Ovary (tissue), 10 donors: ENCODE measurements at regions of chr7 and their contacts with region 1.

Region 1: GRCh38 chr7:112449902-112450806 is at the start of gene IFRD1:
- DNase-seq: peak; percentile 98 to 100 (median 99)
- H3K4me3 ChIP-seq: peak within 1 kb of the TSS; percentile 98
- H3K27ac ChIP-seq: peak within 1 kb of the TSS; percentile 99
- H3K4me1 ChIP-seq: peaks cover 5% of the 10 kb centered on the region
- H3K27me3 ChIP-seq: no peaks in the 10 kb centered on the region
- CTCF ChIP-seq: no peak
- EP300 ChIP-seq: no peak
- POLR2A ChIP-seq: peak; percentile 100
- total RNA-seq, gene IFRD1: 35.1 to 75.1 (median 58.1) TPM

Region 2: DNA sequence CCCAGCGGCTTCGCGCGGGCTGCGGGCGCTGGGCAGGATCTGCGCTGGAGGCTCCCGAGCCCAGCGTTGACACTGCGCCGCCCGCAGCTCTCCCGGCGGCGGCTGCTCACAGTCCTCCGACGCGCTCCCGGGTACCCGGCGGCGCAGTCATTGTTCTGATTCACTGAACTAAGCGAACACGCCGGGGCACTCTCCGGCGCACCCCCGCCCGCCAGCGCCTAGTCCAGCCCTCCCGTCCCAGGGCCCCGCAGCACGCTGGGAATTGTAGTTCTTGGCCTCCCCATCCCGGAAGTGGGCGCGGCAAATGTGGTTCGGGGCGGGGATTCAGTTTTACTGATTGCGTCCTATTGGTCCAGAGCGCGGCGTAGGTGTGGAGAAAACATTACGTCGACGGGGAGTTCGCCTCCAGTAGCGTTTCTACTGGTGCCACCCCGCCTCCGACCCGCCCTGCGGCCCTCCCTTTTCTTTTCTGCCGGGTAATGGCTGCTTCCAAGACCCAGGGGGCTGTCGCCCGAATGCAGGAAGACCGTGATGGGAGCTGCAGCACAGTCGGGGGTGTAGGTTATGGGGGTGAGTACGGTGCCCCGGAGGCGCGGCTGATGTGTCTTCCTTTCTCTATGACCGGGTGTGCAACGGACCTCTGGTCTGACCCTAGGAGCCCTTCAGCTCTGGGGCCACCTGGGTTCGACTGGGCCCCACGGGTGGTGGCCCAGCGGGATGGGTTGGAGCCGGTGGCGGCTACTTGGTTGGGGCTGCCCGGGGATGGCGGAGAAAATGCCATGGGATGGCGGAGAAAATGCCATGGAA is 243.7 kb before region 1 on chr7 and contains the starts of genes DOCK4 and ZNF277:
- intact Hi-C with region 1: loop called in 1 of 4 experiments (anchors 5 kb)
- DNase-seq: peak; percentile 99 to 100 (median 99)
- H3K4me3 ChIP-seq: peak within 1 kb of the TSS; percentile 93
- H3K27ac ChIP-seq: peak within 1 kb of the TSS; percentile 81 to 87
- H3K4me1 ChIP-seq: peaks cover 2% of the 10 kb centered on the region
- H3K27me3 ChIP-seq: no peaks in the 10 kb centered on the region
- CTCF ChIP-seq: no peak
- EP300 ChIP-seq: no peak
- POLR2A ChIP-seq: peak; percentile 47
- total RNA-seq, gene DOCK4: 15.7 to 39.7 (median 28.3) TPM
- total RNA-seq, gene ZNF277: 18.1 to 27.3 (median 21.8) TPM

Region 3: GRCh38 chr7:112708236-112708635 is 258.1 kb after region 1 on chr7:
- intact Hi-C with region 1: no loop called
- DNase-seq: no peak
- H3K4me3 ChIP-seq: no peak overlapping the region
- H3K27ac ChIP-seq: no peak overlapping the region
- H3K4me1 ChIP-seq: no peaks in the 10 kb centered on the region
- H3K27me3 ChIP-seq: peaks cover 2% of the 10 kb centered on the region
- CTCF ChIP-seq: no peak
- EP300 ChIP-seq: no peak
- POLR2A ChIP-seq: no peak